H1 (cell line): ENCODE measurements at regions of chr7 and their contacts with region 1.

Region 1: GRCh38 chr7:37234928-37235327 is 213.7 kb downstream of the ELMO1 start:
- DNase-seq: no peak
- H3K4me3 ChIP-seq: no peak overlapping the region
- H3K27ac ChIP-seq: no peak overlapping the region
- H3K4me1 ChIP-seq: peaks cover 0 to 3% (median 1%) of the 10 kb centered on the region in 4 experiments; a peak in 2 of 7 replicates
- H3K27me3 ChIP-seq: no peaks in the 10 kb centered on the region
- CTCF ChIP-seq: peak in 2 of 3 experiments; percentile 64 to 73; a peak in 3 of 4 replicates
- EP300 ChIP-seq: no peak
- POLR2A ChIP-seq: no peak
- RAD21 ChIP-seq: peak; percentile 90 to 92

Region 2: GRCh38 chr7:37262181-37262580 is 27.3 kb after region 1 on chr7:
- CTCF ChIA-PET with region 1: interaction called, 18 read pairs
- POLR2A ChIA-PET with region 1: no interaction called
- DNase-seq: no peak
- H3K4me3 ChIP-seq: no peak overlapping the region
- H3K27ac ChIP-seq: no peak overlapping the region
- H3K4me1 ChIP-seq: peaks cover 0 to under 1% (median 0%) of the 10 kb centered on the region in 4 experiments; a peak in 1 of 7 replicates
- H3K27me3 ChIP-seq: no peaks in the 10 kb centered on the region
- CTCF ChIP-seq: no peak
- EP300 ChIP-seq: no peak
- POLR2A ChIP-seq: no peak
- RAD21 ChIP-seq: no peak

Region 3: GRCh38 chr7:37275078-37275710 is 40.3 kb after region 1 on chr7:
- CTCF ChIA-PET with region 1: interaction called, 18 read pairs
- POLR2A ChIA-PET with region 1: no interaction called
- DNase-seq: no peak
- H3K4me3 ChIP-seq: no peak overlapping the region
- H3K27ac ChIP-seq: no peak overlapping the region
- H3K4me1 ChIP-seq: peaks cover 0 to 4% (median 0%) of the 10 kb centered on the region in 4 experiments; a peak in 1 of 7 replicates
- H3K27me3 ChIP-seq: no peaks in the 10 kb centered on the region
- CTCF ChIP-seq: no peak
- EP300 ChIP-seq: no peak
- POLR2A ChIP-seq: no peak
- RAD21 ChIP-seq: no peak

Region 4: DNA sequence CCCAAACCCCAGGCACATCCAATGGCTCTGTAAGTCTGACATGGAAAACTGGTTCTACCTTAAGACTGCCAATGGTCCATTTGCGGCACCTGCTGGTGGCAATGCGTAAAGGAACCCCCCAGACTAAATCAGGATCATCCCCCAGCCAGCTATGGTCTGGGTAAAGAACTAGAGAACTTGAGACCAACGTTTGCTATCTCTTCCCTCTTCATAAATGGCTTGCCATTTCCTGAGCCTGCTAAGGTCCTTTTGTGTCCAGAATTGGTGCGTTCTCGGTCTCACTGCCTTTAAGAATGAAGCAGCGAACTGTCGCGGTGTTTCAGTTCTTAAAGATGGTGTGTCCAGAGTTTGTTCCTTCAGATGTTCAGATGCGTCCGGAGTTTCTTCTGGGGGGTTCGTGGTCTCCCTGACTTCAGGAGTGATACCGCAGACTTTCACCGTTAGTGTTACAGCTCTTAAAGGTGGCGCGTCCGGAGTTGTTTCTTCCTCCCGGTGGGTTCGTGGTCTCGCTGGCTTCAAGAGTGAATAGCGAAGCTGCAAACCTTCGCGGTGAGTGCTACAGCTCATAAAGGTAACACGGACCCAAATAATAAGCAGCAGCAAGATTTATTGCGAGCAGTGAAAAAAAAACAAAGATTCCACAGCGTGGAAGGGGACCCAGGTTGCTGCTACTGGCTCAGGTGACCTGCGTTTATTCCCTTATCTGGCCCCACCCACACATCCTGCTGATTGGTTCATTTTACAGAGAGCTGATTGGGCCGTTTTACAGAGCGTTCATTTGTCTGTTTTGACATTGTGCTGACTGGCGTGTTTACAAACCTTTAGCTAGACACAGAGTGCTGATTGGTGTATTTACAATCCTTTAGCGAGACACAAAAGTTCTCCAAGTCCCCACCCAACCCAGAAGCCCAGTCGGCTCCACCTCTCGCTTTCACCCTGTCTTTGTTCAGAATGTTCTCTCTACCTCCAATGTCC is 118.3 kb after region 1 on chr7:
- CTCF ChIA-PET with region 1: interaction called, 40 read pairs
- POLR2A ChIA-PET with region 1: no interaction called
- DNase-seq: peak; percentile 17 to 55
- H3K4me3 ChIP-seq: no peak overlapping the region
- H3K27ac ChIP-seq: no peak overlapping the region
- H3K4me1 ChIP-seq: peaks cover 2 to 7% (median 5%) of the 10 kb centered on the region in 4 experiments; a peak in 5 of 7 replicates
- H3K27me3 ChIP-seq: no peaks in the 10 kb centered on the region
- CTCF ChIP-seq: peak; percentile 50 to 72 (median 65)
- EP300 ChIP-seq: no peak
- POLR2A ChIP-seq: no peak
- RAD21 ChIP-seq: peak; percentile 77 to 83

Region 5: GRCh38 chr7:37495574-37496184 is 260.8 kb after region 1 on chr7:
- CTCF ChIA-PET with region 1: interaction called, 76 read pairs
- POLR2A ChIA-PET with region 1: no interaction called
- DNase-seq: no peak
- H3K4me3 ChIP-seq: no peak overlapping the region
- H3K27ac ChIP-seq: no peak overlapping the region
- H3K4me1 ChIP-seq: peaks cover 0 to 2% (median 0%) of the 10 kb centered on the region in 4 experiments; a peak in 3 of 7 replicates
- H3K27me3 ChIP-seq: no peaks in the 10 kb centered on the region
- CTCF ChIP-seq: peak in 2 of 3 experiments; percentile 29 to 49; a peak in 2 of 4 replicates
- EP300 ChIP-seq: no peak
- POLR2A ChIP-seq: no peak
- RAD21 ChIP-seq: peak; percentile 27 to 36; a peak in 2 of 4 replicates